Activated B cell treated with CpG ODN at 0.5 μM for 24 hours (primary cell): ENCODE measurements at regions of chr20 and their contacts with region 1.

Region 1: DNA sequence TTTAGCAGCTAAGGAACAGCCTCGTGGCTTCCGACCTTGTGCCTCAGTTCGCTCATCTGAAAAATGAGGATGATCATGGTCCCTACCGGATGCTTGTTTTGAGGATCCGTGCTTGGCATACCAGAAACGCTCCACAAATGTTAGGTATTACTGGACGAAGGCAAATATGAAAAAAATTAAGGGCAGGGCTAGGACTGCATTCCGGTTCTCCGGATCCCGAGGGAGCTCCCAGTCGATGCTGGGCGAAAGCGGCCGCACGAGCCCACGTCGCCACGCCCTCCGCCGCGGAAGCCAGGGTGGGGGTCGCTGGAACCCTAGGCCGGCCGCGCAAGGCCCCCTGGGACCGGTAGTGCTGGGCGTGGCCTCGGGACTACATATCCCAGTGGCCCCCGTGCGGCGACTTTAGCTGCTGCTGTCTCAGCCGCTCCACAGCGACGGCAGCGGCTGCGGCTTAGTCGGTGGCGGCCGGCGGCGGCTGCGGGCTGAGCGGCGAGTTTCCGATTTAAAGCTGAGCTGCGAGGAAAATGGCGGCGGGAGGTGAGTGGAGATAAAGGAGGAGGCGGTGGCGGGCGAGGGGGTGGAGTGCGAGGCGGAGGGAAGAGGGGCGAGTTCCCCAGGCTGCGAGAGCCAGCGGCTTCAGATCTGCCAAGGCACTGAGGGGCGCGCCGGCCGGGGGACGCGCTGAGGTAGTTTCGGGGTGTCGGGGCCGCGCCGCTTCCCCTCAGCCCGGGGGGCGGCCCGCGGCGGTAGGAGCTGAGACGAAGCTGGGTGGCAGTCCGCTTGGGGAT is at the start of gene NCOA3:
- DNase-seq: peak; percentile 89
- ATAC-seq: peak; percentile 89
- H3K4me3 Mint-ChIP-seq: peak within 1 kb of the TSS; percentile 100
- H3K27ac Mint-ChIP-seq: peak within 1 kb of the TSS; percentile 98
- H3K4me1 Mint-ChIP-seq: peaks cover 59% of the 10 kb centered on the region
- H3K27me3 Mint-ChIP-seq: no peaks in the 10 kb centered on the region
- CTCF ChIP-seq: no peak
- total RNA-seq, gene NCOA3: 186 and 187 TPM in 2 replicates

Region 2: GRCh38 chr20:47150403-47151152 is 351.1 kb before region 1 on chr20:
- CTCF ChIA-PET with region 1: no interaction called
- POLR2A ChIA-PET with region 1: no interaction called
- intact Hi-C with region 1: no loop called
- DNase-seq: no peak
- ATAC-seq: peak; percentile 56
- H3K4me3 Mint-ChIP-seq: no peak overlapping the region
- H3K27ac Mint-ChIP-seq: no peak overlapping the region
- H3K4me1 Mint-ChIP-seq: peaks cover 2% of the 10 kb centered on the region
- H3K27me3 Mint-ChIP-seq: peaks cover 26% of the 10 kb centered on the region
- CTCF ChIP-seq: no peak

Region 3: DNA sequence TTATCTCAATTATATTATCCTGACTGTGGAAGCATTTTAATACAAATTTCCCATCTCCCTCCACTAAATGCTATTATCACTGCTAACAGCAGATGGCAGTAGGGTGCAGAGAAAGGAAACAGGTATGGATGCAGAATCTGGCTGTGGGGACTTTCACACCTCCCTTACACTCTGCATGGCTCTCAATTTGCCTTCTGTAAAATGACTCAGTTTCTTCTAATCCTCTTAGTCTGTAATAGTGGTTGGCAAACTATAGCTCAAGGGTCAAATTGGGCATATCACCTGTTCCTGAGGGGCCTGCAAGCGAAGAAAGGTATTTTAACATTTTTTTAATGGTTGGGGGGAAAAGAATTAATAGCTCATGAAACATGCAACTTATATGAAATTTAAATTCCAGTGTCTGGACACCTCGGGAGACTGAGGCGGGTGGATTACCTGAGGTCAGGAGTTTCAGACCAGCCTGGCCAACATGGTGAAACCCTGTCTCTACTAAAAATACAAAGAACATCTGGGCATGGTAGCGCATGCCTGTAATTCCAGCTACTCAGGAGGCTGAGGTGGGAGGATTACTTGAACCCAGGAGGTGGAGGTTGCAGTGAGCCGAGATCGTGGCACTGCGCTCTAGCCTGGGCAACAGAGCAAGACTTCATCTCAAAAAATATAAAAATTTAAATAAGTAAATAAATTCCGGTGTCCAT is 228.6 kb before region 1 on chr20:
- CTCF ChIA-PET with region 1: interaction called, 3 read pairs
- POLR2A ChIA-PET with region 1: interaction called, 8 read pairs
- intact Hi-C with region 1: loop called (anchors 5 kb)
- DNase-seq: no peak
- ATAC-seq: peak; percentile 76
- H3K4me3 Mint-ChIP-seq: no peak overlapping the region
- H3K27ac Mint-ChIP-seq: peak overlapping the region; percentile 60
- H3K4me1 Mint-ChIP-seq: peaks cover 36% of the 10 kb centered on the region
- H3K27me3 Mint-ChIP-seq: no peaks in the 10 kb centered on the region
- CTCF ChIP-seq: peak; percentile 34

Region 4: GRCh38 chr20:47392015-47392720 is 109.5 kb before region 1 on chr20:
- CTCF ChIA-PET with region 1: no interaction called
- POLR2A ChIA-PET with region 1: interaction called, 36 read pairs
- intact Hi-C with region 1: no loop called
- DNase-seq: no peak
- ATAC-seq: peak; percentile 74
- H3K4me3 Mint-ChIP-seq: peak overlapping the region; percentile 55
- H3K27ac Mint-ChIP-seq: peak overlapping the region; percentile 95
- H3K4me1 Mint-ChIP-seq: peaks cover 47% of the 10 kb centered on the region
- H3K27me3 Mint-ChIP-seq: no peaks in the 10 kb centered on the region
- CTCF ChIP-seq: no peak

Region 5: DNA sequence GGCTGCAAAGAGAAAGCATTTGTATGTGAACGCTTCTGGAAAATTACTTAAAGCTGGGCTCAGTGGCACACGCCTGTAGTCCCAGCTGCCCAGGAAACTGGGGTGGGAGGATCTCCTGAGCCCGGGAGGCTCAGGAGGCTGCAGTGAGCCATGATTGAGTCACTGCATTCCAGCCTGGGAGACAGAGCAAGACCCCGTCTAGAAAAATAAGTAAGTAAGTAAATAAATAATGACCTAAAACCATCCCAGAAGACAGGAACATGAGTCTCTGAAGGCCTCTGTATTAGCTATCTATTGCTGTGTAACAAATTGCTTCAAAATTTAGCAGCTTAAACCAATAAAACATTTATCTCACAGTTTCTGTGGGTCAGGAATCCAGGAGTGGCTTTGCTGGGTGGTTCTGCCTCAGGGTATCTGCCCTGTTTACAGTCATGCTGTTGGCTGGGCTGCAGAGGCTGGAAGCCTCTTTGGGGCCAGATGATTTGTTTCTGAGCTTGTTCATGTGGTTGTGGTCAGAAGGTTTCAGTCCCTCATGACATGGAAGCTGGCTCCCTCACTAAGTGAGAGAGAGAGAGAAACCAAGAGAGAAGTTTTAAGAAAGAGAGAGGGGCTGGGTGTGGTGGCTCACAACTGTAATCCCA is 48.4 kb before region 1 on chr20:
- CTCF ChIA-PET with region 1: no interaction called
- POLR2A ChIA-PET with region 1: interaction called, 26 read pairs
- intact Hi-C with region 1: no loop called
- DNase-seq: no peak
- ATAC-seq: peak; percentile 78
- H3K4me3 Mint-ChIP-seq: peak overlapping the region; percentile 49
- H3K27ac Mint-ChIP-seq: peak overlapping the region; percentile 80
- H3K4me1 Mint-ChIP-seq: peaks cover 55% of the 10 kb centered on the region
- H3K27me3 Mint-ChIP-seq: no peaks in the 10 kb centered on the region
- CTCF ChIP-seq: no peak

Region 6: GRCh38 chr20:47475419-47476044 is 26.1 kb before region 1 on chr20:
- CTCF ChIA-PET with region 1: no interaction called
- POLR2A ChIA-PET with region 1: interaction called, 75 read pairs
- intact Hi-C with region 1: loop called (anchors 1 kb)
- DNase-seq: no peak
- ATAC-seq: no peak
- H3K4me3 Mint-ChIP-seq: no peak overlapping the region
- H3K27ac Mint-ChIP-seq: peak overlapping the region; percentile 95
- H3K4me1 Mint-ChIP-seq: peaks cover 58% of the 10 kb centered on the region
- H3K27me3 Mint-ChIP-seq: no peaks in the 10 kb centered on the region
- CTCF ChIP-seq: no peak

Region 7: DNA sequence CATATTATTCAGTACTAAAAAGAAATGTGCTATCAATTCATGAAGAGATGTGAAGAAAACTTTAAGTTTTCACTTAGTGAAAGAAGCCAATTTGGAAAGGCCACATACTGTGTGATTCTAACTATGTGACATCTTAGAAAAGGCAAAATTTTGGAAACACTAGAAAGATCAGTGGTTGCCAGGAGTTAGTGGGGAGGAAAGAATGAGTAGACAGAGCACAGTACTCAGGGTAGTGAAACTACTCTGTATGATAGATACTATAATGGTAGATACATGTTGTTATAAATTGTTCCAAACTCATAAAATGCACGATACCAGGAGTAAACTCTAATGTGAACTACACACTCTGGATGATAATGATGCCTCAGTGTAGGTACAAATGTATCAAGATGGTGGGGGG is 14.2 kb after region 1 on chr20:
- CTCF ChIA-PET with region 1: no interaction called
- POLR2A ChIA-PET with region 1: interaction called, 40 read pairs
- intact Hi-C with region 1: loop called (anchors 2 kb)
- DNase-seq: no peak
- ATAC-seq: peak; percentile 20
- H3K4me3 Mint-ChIP-seq: peak overlapping the region; percentile 1
- H3K27ac Mint-ChIP-seq: peak overlapping the region; percentile 70
- H3K4me1 Mint-ChIP-seq: peaks cover 69% of the 10 kb centered on the region
- H3K27me3 Mint-ChIP-seq: no peaks in the 10 kb centered on the region
- CTCF ChIP-seq: no peak

Region 8: GRCh38 chr20:47576516-47577033 is 74.9 kb after region 1 on chr20:
- CTCF ChIA-PET with region 1: no interaction called
- POLR2A ChIA-PET with region 1: interaction called, 3 read pairs
- intact Hi-C with region 1: loop called (anchors 2 kb)
- DNase-seq: no peak
- ATAC-seq: peak; percentile 63
- H3K4me3 Mint-ChIP-seq: peak overlapping the region; percentile 71
- H3K27ac Mint-ChIP-seq: peak overlapping the region; percentile 80
- H3K4me1 Mint-ChIP-seq: peaks cover 91% of the 10 kb centered on the region
- H3K27me3 Mint-ChIP-seq: no peaks in the 10 kb centered on the region
- CTCF ChIP-seq: no peak

Region 9: DNA sequence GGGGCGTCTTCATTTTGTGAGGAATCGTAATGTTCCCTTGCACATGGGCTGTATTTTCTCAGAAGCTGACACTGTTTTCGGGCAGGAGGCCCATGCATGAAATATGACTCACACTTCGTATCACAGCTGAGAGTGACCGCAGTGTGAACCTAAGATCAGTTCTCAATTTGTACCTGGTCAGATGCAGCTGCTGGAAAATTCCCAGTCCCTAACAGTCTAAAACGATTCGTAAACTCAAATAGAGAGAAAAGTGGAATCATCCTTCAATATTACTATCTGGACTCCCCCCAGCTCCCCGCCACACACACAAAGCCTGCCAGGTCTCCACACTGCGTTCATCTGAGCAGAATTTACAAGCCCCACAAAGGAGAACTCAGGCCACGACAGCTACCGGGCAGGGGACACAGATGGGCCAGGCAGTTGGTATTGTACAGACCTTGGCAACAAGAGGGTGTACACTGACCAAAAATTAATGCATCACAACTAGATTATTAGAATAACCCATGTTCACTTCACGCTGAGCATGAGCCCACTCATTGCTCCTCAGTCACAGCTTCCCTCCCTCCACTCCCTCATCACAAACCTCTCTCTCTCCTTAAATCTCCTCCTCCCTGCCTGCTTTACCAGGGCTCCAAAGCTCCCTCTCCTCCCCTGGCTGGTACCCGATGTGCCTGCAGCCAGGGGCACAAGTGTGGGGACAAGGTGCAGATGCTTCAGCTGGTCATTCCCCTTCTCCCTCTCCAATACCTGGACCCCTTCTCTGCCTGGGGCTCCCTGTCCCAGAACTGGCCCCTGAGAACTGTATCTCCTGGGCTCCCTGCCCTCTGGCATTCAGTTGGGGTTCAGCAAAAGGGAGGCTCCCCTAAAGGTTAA is 837.7 kb after region 1 on chr20:
- CTCF ChIA-PET with region 1: no interaction called
- POLR2A ChIA-PET with region 1: no interaction called
- intact Hi-C with region 1: no loop called
- DNase-seq: no peak
- ATAC-seq: peak; percentile 38
- H3K4me3 Mint-ChIP-seq: no peak overlapping the region
- H3K27ac Mint-ChIP-seq: peak overlapping the region; percentile 21
- H3K4me1 Mint-ChIP-seq: peaks cover 31% of the 10 kb centered on the region
- H3K27me3 Mint-ChIP-seq: peaks cover 20% of the 10 kb centered on the region
- CTCF ChIP-seq: no peak